Psoas muscle (tissue), 8 donors: ENCODE measurements at regions of chr2 and their contacts with region 1.

Region 1: GRCh38 chr2:207746131-207746530 is 23.6 kb downstream of the FZD5 start:
- DNase-seq: peak in 1 of 2 donors; percentile 58
- ATAC-seq: peak; percentile 70 to 95 (median 83)
- H3K4me3 ChIP-seq: no peak overlapping the region
- H3K27ac ChIP-seq: no peak overlapping the region
- H3K4me1 ChIP-seq: no peaks in the 10 kb centered on the region
- H3K27me3 ChIP-seq: no peaks in the 10 kb centered on the region
- CTCF ChIP-seq: peak; percentile 92

Region 2: DNA sequence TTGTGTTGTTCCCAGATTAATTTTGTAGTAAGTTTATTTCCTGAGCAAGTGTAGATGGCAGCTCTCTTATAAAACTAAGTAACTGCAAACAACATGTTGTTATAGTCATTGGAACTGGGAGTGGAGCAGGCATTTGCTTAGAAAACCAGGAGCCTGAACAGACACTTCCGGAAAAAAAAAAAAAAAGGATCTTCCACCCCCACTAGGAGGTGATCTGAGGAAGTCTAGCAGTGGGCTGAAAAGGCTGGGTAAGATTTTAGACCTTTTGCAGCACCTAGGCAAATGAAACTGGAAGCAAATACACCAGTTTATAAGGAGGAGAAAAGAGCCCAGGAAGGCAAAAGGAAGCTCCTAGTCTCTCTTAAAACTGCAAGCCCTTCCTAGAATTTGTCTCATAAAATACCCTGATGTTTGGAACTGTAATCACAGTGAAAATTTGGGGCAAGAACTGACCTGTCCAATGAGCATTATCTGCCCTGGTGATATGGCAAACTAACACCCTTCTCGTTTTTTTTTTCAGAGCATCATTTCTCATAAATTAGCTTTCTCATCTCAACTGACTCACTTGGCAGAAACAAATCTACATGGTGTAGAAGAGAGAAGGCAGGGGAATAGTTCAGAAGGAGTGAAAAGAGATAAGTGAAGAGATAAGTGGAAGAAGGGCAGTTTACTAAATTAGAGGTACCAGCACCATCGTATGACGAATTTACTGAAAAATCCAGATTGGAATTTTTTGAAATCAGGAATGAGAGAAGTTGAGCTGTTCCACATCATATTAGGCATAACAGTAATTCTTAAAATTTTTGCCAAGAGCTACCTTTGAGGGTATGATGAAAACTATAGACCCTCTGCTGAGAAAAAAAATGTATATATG is 39.0 kb before region 1 on chr2:
- intact Hi-C with region 1: no loop called
- DNase-seq: no peak
- ATAC-seq: no peak
- H3K4me3 ChIP-seq: no peak overlapping the region
- H3K27ac ChIP-seq: no peak overlapping the region
- H3K4me1 ChIP-seq: peaks cover 9% of the 10 kb centered on the region
- H3K27me3 ChIP-seq: no peaks in the 10 kb centered on the region
- CTCF ChIP-seq: no peak

Region 3: DNA sequence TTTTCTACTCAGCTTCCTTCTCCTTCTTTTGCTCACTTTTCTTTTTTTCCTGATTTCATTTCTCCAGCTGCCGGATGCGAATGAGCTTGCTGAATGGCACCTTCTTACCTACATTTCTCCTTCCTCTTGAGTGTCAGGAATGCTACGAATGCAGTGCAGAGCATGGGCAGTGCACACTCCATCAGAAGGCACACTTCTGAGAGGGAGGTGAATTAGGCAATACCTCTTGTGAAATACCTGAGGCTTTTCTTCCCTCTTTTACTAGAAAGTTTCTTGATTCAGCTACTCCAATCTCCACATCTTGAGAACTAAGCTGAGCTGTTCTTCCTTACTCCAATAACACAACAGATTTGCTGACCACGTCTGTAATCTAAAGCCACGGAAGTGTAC is 228.1 kb after region 1 on chr2:
- intact Hi-C with region 1: loop called in 1 of 2 experiments (anchors 5 kb)
- DNase-seq: no peak
- ATAC-seq: no peak
- H3K4me3 ChIP-seq: no peak overlapping the region
- H3K27ac ChIP-seq: no peak overlapping the region
- H3K4me1 ChIP-seq: peaks cover 8% of the 10 kb centered on the region
- H3K27me3 ChIP-seq: no peaks in the 10 kb centered on the region
- CTCF ChIP-seq: no peak

Region 4: DNA sequence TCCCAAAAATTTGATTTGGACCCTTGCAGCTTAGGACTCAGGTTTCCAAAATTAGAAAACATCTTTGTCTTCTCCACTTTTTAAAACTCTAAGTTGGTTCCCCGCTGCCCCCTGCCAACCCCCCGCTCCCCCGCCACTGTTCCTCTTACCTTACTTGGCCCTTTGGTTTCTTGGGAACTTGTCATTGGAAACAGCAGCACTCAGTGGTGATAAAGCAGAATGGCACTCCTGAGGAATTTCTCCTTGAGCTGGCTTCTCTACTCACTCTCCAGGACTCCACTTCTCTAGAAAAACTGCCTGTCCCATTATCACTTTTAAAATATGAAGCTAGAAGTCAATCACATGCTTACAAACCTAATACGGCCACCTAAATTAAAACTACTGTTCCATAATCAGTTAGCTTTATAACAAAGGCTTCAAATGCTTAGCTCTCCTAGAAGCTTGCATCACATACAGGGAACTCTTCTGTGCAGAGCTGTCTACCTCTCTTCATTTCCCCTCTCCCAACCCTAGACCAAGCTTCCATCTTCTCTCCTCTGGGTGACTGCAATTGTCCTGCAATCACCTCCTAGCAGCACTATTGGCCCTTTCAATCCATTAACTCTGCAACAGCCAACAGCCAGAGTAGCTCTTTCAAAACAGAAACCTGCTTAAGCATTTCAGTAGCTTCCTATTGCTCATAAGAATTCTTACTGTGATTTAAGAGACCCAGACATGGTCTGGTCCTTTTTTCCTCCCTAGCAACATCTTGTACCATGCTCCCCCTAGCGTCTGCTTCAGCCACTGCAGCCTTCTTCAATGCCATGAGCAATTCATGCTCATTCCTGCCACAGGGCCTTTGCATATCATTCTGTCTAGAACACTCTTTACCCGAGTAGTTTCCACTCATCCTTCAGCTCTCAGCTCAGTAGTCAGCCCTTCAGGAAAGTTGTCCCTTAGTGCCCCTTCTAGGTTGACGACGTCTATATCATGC is 294.4 kb after region 1 on chr2:
- intact Hi-C with region 1: loop called (anchors 2 to 5 kb)
- DNase-seq: peak; percentile 54 to 71
- ATAC-seq: peak; percentile 60 to 84 (median 80)
- H3K4me3 ChIP-seq: no peak overlapping the region
- H3K27ac ChIP-seq: no peak overlapping the region
- H3K4me1 ChIP-seq: no peaks in the 10 kb centered on the region
- H3K27me3 ChIP-seq: no peaks in the 10 kb centered on the region
- CTCF ChIP-seq: peak; percentile 70

Region 5: DNA sequence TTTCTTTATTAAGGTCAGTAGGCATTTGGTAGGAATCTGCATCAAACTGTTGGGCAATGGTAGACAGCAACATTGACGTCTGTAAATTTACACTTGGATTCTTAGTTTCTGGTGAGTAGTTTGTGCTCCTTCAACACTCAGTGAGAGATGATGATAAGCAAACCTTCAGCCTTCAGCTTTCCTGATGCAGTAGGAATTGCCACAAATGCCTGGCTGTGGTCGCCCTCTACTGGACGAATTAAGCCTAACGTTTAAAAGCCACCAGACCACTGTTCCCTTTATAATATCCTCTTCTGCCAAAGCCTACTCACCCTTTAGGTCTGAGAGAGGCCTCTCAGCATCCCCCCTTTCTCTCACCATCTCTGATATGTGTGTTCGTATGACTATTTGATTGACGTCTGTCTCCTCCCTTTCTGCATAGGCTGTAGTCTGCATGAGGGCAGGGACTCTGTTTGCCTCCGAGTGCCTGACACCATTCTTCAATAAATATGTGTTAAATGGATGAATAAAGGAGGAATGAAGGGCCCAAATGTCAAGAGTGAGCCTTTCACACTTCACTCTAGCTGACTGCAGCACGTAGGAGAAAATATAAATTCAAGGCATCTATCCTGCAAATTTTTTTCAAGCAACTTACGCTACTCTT is 326.2 kb after region 1 on chr2:
- intact Hi-C with region 1: loop called (anchors 2 to 5 kb)
- DNase-seq: peak; percentile 22 to 55
- ATAC-seq: peak; percentile 63 to 83 (median 70)
- H3K4me3 ChIP-seq: no peak overlapping the region
- H3K27ac ChIP-seq: no peak overlapping the region
- H3K4me1 ChIP-seq: no peaks in the 10 kb centered on the region
- H3K27me3 ChIP-seq: peaks cover 0 to 5% (median 0%) of the 10 kb centered on the region in 3 donors
- CTCF ChIP-seq: peak; percentile 77

Region 6: DNA sequence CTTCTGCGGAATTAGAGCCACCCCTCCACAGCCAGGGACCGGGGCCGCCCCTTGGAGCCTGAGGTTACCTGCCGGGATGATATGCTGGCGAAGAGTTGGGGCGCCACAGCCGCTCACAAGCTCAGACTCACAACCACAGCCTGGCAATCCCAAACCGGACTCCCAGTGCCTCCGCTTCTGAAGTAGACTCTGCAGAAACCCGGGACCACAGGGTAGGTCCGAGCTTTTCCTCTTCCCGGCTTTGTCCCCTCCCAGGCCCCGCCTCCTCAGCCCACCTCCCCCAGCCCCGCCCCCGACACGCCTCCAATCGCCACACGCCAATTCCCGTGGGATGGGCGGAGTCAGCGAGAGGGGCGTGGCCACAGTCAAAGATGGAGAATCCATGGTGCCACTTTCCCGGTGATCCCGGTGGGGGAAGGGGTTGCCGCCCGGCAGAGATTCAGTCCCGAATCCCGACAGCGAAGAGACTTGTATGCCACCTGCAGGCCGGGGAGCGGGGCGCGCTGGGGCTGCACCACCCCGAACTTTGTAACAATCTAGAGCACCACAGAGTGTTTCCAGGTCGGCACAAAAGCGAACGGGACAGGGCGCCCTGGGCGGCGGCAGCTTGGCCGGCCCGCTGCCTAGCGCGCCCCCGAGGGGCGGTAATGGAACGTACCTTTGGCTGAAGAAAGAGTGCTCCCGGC is 508.9 kb after region 1 on chr2 and contains the start of gene IDH1:
- intact Hi-C with region 1: loop called in 1 of 2 experiments (anchors 5 kb)
- DNase-seq: peak; percentile 97 to 98
- ATAC-seq: peak; percentile 97 to 98 (median 98)
- H3K4me3 ChIP-seq: peak within 1 kb of the TSS; percentile 81
- H3K27ac ChIP-seq: peak within 1 kb of the TSS; percentile 66
- H3K4me1 ChIP-seq: peaks cover 18% of the 10 kb centered on the region
- H3K27me3 ChIP-seq: no peaks in the 10 kb centered on the region
- CTCF ChIP-seq: no peak
- total RNA-seq, gene IDH1: 9.7 to 18.0 (median 13.3) TPM